ENCODE measurements at regions of chr1 and their contacts with region 1.

Region 1: DNA sequence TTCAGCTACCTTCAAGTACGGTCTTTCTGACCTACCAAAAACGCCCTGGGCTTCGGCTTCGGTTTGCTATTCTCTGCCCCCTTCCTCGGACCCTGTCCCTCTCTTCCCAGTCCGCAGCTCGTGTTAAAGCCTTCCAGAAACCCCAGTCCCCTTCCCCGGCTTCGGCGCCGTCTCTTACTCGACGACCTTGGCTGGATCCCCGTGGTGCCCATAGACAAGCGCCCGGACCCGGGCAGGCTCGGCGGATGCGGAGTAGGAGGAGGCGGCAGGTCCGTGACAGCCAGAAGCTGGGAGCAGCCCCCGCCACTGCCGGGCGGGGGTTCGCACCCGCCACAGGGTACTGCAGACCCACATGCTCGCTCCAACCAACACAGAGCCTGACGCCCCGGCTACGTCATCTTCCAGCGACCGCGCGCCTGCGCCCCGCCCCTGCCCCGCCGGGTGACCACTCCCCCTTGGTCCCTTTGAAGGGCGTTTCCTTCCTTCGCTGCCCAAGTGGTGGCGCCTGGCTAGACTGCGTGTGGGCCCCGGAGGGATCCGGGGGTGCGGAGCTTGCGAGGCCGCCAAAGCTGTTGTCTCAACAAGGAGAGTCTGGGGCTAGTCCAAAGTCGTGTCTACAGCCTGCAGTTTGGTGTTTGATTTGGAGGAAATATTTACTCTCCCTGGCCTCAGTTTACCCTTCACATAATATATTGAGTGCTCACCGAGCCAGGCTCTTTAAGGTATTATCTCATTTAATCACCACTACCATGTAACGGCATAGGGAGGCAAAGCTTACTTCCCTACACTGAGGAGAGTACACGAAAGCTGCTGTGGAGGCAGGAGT is at the start of gene MECR:
- DNase-seq: peak; percentile 97
- total RNA-seq, gene MECR: 29.9 TPM

Region 2: DNA sequence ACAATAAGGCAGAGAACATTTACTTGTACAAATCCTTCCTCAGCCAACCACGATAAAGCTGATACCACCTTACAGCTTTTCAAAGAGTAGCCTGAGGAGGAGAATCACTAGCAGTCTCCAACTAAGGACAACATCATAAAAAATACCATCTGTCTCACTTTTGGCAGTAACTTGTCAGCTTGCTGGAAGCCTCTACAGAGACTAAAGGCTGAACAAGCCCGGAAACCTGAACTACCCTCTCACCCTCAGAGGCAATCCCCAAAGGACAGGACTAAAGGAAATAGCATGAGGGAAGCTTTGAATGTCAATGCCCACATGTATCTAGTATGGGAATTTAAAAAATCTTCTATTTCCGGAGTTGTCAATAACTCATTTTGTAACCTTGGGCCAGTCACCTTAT is 59.7 kb before region 1 on chr1:
- intact Hi-C with region 1: no loop called
- DNase-seq: no peak

Region 3: DNA sequence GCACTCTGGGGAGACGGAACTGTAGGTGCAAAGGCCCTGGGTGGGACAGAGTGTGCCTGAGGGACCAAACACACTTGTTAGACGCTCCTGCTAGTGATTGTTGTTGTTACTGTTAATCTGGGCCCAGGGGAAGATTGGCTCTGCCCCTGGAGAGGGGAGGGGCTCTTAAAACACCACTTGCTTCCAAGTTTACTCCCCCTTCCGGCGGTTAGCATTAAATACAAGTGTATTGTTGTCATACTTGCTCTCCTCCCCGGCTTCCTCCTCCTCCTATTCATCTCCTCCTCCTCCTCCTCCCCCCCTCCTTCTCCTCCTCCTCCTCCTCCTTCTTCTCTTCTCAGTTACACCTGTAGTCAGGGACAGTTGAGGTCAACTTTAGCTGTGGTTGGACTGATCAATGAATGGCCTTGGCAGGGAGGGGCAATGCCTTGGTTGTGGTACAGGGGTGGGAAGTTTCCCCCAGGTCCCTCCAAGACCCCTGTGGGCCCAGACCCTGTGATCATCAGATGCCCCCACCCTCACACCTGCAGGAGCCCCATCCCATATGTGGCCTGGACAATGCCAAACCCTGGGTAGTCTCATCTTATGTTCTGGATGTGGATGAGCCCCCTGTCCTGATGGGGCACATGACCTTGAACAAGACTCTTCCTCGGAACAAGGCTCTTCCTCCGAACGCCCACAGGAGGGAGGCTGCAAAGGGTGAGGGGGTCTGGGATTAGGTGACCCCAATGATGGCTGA is 222.9 kb after region 1 on chr1:
- intact Hi-C with region 1: loop called (anchors 10 kb)
- DNase-seq: peak; percentile 53

Region 4: DNA sequence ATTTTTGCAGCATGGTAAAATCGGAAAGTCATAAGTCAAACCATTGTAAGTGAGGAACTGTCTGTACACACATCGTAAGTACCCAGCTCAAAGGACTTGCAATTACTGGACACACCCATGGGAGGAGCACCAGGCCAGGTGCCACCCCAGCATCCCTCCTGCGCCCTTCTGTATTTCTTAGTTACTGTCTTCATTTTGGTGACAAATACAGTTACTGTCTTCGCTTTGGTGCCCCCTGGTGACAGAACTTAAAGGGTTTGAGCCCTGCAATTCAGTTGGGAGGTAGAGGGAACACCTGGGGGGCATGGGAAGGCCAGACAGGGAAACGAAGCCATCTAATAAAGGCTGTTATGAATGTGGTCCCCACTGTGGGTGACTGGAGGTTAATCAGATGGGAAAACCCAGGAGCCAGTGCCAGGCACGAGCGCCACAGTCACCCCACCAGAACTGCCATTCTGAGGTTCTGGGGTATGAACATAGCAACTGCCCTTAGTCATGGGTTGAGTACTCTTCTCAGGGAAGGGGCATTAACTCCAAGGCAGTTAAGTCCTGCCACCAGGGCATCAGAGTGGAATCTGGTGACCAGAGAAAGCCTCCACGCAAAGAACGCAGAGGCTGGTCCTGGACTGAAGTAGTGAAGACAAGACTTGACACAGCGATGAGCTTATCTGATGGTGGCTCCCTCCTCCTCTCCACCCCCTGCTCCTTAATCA is 618.4 kb after region 1 on chr1:
- intact Hi-C with region 1: loop called (anchors 10 kb)
- DNase-seq: peak; percentile 33

Region 5: GRCh38 chr1:30111431-30111830 is 880.7 kb after region 1 on chr1:
- intact Hi-C with region 1: loop called (anchors 10 kb)
- DNase-seq: no peak